CD4-positive, alpha-beta memory T cell (primary cell): ENCODE measurements at regions of chr7 and their contacts with region 1.

Region 1: GRCh38 chr7:22103255-22103969 is 157.7 kb upstream of the CDCA7L start:
- DNase-seq: peak; percentile 37 to 53 (median 50)
- H3K4me3 ChIP-seq: no peak overlapping the region
- H3K4me3 Mint-ChIP-seq: peak overlapping the region in 1 of 8 donors; percentile 34
- H3K27ac ChIP-seq: no peak overlapping the region
- H3K27ac Mint-ChIP-seq: no peak overlapping the region
- H3K4me1 ChIP-seq: no peaks in the 10 kb centered on the region
- H3K4me1 Mint-ChIP-seq: peaks cover 3 to 4% (median 3%) of the 10 kb centered on the region in 4 donors
- H3K27me3 ChIP-seq: no peaks in the 10 kb centered on the region
- H3K27me3 Mint-ChIP-seq: peaks cover 12 to 16% of the 10 kb centered on the region in 2 donors

Region 2: DNA sequence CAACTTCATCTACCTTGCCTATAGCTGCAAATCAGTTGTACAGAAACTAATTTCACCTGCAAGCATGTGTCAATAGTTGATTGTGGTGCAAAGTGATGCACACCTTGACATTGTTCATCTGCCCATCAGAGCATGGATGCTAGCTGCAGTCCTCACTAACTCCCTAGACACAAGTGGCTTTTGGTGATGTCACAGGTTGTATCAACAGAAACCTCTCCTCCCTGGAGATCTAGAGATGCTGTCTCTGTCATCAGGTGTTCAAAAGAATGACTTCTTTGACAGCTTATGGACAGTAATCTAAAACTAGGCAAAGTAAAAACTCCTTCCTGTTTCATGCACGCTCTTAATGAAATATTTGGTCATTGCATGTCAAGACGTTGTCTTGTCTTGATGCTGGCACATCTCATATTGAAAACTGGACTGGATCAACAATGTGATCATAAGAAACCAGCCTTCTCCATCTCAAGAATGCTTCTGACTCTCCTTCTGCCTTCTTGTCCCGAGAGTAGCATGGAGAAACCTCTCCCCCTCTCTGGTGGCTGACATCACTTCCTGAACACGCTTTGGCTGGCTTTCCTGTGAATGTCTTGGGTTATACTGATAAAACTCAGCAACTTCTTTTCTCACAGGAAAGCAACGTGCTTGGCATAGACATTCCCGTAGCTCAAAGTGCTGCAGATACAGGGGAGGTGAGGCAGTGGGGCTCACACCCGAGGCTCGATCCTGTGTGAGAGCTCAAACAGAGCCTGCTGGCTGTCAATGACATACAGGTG is 18.5 kb after region 1 on chr7:
- CTCF ChIA-PET with region 1: interaction called, 14 read pairs
- POLR2A ChIA-PET with region 1: no interaction called
- intact Hi-C with region 1: no loop called
- DNase-seq: no peak
- H3K4me3 ChIP-seq: no peak overlapping the region
- H3K4me3 Mint-ChIP-seq: peak overlapping the region in 7 of 8 donors; percentile 17 to 81 (median 63)
- H3K27ac ChIP-seq: no peak overlapping the region
- H3K27ac Mint-ChIP-seq: peak overlapping the region in 2 of 7 donors; percentile 47 to 57
- H3K4me1 ChIP-seq: peaks cover 8% of the 10 kb centered on the region
- H3K4me1 Mint-ChIP-seq: peaks cover 8 to 11% (median 9%) of the 10 kb centered on the region in 4 donors
- H3K27me3 ChIP-seq: no peaks in the 10 kb centered on the region
- H3K27me3 Mint-ChIP-seq: peaks cover 12 to 14% of the 10 kb centered on the region in 2 donors

Region 3: GRCh38 chr7:22488643-22489462 is 385.4 kb after region 1 on chr7:
- CTCF ChIA-PET with region 1: interaction called, 35 read pairs
- POLR2A ChIA-PET with region 1: no interaction called
- intact Hi-C with region 1: loop called (anchors 1 kb)
- DNase-seq: peak; percentile 43 to 57 (median 48)
- H3K4me3 ChIP-seq: no peak overlapping the region
- H3K4me3 Mint-ChIP-seq: no peak overlapping the region
- H3K27ac ChIP-seq: no peak overlapping the region
- H3K27ac Mint-ChIP-seq: no peak overlapping the region
- H3K4me1 ChIP-seq: no peaks in the 10 kb centered on the region
- H3K4me1 Mint-ChIP-seq: no peaks in the 10 kb centered on the region
- H3K27me3 ChIP-seq: no peaks in the 10 kb centered on the region
- H3K27me3 Mint-ChIP-seq: peaks cover 3 to 6% of the 10 kb centered on the region in 2 donors